Psoas muscle (tissue), 8 donors: ENCODE measurements at regions of chr12 and their contacts with region 1.

Region 1: GRCh38 chr12:11202811-11203210 is 16.1 kb upstream of the TAS2R42 start:
- DNase-seq: no peak
- ATAC-seq: no peak
- H3K4me3 ChIP-seq: no peak overlapping the region
- H3K27ac ChIP-seq: no peak overlapping the region
- H3K4me1 ChIP-seq: no peaks in the 10 kb centered on the region
- H3K27me3 ChIP-seq: no peaks in the 10 kb centered on the region
- CTCF ChIP-seq: no peak

Region 2: GRCh38 chr12:10771132-10771733 is 431.6 kb before region 1 on chr12:
- intact Hi-C with region 1: loop called (anchors 2 to 5 kb)
- DNase-seq: no peak
- ATAC-seq: peak; percentile 44 to 76 (median 62)
- H3K4me3 ChIP-seq: no peak overlapping the region
- H3K27ac ChIP-seq: no peak overlapping the region
- H3K4me1 ChIP-seq: no peaks in the 10 kb centered on the region
- H3K27me3 ChIP-seq: peaks cover 1 to 25% (median 6%) of the 10 kb centered on the region in 3 donors
- CTCF ChIP-seq: peak; percentile 80

Region 3: GRCh38 chr12:10851243-10851858 is 351.5 kb before region 1 on chr12:
- intact Hi-C with region 1: loop called in 1 of 2 experiments (anchors 10 kb)
- DNase-seq: no peak
- ATAC-seq: no peak
- H3K4me3 ChIP-seq: no peak overlapping the region
- H3K27ac ChIP-seq: no peak overlapping the region
- H3K4me1 ChIP-seq: no peaks in the 10 kb centered on the region
- H3K27me3 ChIP-seq: no peaks in the 10 kb centered on the region
- CTCF ChIP-seq: no peak

Region 4: GRCh38 chr12:10867381-10867780 is 335.4 kb before region 1 on chr12:
- intact Hi-C with region 1: loop called in 1 of 2 experiments (anchors 10 kb)
- DNase-seq: no peak
- ATAC-seq: peak in 1 of 4 donors; percentile 41
- H3K4me3 ChIP-seq: no peak overlapping the region
- H3K27ac ChIP-seq: no peak overlapping the region
- H3K4me1 ChIP-seq: no peaks in the 10 kb centered on the region
- H3K27me3 ChIP-seq: no peaks in the 10 kb centered on the region
- CTCF ChIP-seq: no peak

Region 5: DNA sequence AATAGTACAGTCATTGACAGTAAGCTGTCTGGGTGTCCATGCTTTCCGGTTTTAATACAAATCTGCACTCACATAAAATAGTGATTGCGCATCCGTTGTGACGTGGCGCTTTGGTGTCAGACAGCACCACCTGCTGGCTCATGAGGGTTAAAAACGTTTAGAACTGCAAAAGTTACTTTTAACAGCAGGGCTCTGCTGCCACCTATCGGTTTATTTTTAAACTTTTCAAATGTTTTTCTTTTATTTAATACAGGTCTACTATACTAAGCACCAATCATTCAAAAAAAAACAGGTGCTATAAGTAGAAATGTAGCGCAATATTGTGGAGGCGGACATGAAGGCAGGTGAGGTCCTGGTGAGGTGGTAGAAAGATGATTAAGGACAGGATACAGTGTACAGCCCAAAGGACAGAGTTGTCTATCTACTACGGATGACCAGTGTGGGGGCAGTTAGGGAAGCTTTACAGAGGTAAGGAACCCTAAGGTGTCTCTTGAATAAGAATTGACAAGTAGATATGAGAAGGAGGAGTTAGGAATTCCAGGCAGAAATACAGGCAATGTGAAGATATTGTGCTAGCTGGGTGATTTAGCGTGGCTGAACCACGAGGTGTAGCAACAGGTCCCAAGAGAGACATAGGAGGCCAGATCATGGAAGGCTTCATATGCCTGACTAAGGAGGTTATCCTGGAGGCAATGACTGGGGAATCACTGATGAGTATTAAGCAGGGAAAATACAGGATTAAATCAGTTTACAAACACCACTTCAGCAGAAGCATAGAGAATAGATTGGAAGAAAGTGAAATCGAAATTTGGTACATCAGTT is 284.0 kb after region 1 on chr12:
- intact Hi-C with region 1: loop called in 1 of 2 experiments (anchors 5 kb)
- DNase-seq: peak; percentile 71 to 74
- ATAC-seq: peak; percentile 76 to 94 (median 88)
- H3K4me3 ChIP-seq: no peak overlapping the region
- H3K27ac ChIP-seq: no peak overlapping the region
- H3K4me1 ChIP-seq: no peaks in the 10 kb centered on the region
- H3K27me3 ChIP-seq: no peaks in the 10 kb centered on the region
- CTCF ChIP-seq: peak; percentile 94